K562 (cell line): ENCODE measurements at regions of chr14 and their contacts with region 1.

Region 1: DNA sequence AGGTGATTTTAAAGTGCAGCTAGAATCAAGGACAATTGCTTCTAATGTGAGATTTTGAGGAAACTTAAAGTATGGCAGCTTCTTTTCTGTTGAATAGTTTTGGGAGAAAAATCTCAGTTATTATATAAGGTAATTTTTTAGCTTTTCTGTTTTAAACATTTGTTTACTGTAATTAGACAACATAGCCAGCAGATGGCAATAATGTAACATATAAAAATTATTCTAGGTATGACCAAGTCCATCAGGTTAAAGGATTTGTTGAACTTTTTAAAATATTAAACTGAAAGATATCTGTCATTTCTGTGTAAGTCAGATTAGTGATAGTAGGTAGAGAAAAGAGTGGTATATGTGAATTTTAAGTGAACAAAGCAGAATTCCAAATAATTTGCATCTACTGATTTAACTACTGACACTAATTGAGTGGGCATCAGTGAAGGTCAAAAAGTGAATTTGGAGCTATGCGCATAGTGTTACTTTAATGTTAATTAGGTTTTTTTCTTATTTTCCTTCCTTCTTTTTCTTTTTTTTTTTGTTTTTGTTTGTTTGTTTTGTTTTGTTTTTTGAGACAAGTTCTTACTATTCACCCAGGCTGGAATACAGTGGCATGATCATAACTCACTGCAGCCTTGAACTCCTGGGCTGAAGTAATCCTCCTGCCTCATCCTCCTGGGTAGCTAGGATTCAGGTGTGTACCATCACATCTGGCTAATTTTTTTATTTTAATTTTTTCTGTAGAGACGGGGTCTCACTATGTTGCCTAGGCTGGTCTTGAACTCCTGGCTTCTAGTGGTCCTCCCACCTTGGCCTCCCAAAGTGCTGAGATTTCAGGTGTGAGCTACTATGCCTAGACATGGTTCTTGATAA is 18.6 kb downstream of the PRORP start:
- DNase-seq: peak in 1 of 4 experiments; percentile 10
- ATAC-seq: no peak
- H3K4me3 ChIP-seq: no peak overlapping the region
- H3K27ac ChIP-seq: no peak overlapping the region
- H3K4me1 ChIP-seq: no peaks in the 10 kb centered on the region
- H3K27me3 ChIP-seq: no peaks in the 10 kb centered on the region
- CTCF ChIP-seq: peak in 2 of 3 experiments; percentile 15 to 47; a peak in 3 of 6 replicates
- EP300 ChIP-seq: no peak
- POLR2A ChIP-seq: no peak
- RAD21 ChIP-seq: peak; percentile 62 to 63

Region 2: DNA sequence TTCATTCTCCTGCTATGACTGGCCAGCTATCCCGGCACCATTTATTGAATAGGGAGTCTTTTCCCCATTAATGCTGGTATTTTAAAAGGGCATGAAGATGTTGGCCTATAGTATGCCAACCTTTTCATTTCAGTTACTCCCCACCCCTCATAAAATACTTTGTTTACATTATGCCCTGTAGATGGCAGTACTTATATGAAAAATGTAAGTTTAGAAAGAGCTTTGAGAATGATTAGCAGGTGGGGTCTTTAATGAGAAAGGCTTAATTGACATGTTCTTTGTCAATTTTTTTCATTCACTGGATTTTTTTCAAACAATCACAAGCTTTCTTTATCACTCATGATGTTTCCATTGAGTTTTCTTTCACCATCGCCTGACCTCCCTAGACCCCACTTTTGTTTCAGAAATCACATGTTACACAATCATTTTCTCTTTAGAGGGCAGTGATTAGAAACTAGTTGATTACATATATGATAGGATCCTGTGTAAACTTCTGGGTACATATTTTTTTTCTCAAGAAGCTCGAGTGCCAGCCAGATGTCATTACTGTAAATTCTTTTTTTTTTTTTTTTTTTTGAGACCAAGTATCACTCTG is 88.6 kb after region 1 on chr14:
- CTCF ChIA-PET with region 1: no interaction called
- POLR2A ChIA-PET with region 1: no interaction called
- in situ Hi-C with region 1: no loop called
- intact Hi-C with region 1: loop called (anchors 5 kb)
- DNase-seq: peak; percentile 3 to 14 (median 14)
- ATAC-seq: no peak
- H3K4me3 ChIP-seq: no peak overlapping the region
- H3K27ac ChIP-seq: no peak overlapping the region
- H3K4me1 ChIP-seq: no peaks in the 10 kb centered on the region
- H3K27me3 ChIP-seq: no peaks in the 10 kb centered on the region
- CTCF ChIP-seq: peak; percentile 5 to 49 (median 29); a peak in 3 of 6 replicates
- EP300 ChIP-seq: no peak
- POLR2A ChIP-seq: no peak
- RAD21 ChIP-seq: peak; percentile 56 to 60

Region 3: GRCh38 chr14:35423621-35424020 is 282.7 kb after region 1 on chr14:
- CTCF ChIA-PET with region 1: interaction called, 12 read pairs
- POLR2A ChIA-PET with region 1: no interaction called
- in situ Hi-C with region 1: no loop called
- intact Hi-C with region 1: no loop called
- DNase-seq: no peak
- ATAC-seq: no peak
- H3K4me3 ChIP-seq: no peak overlapping the region
- H3K27ac ChIP-seq: no peak overlapping the region
- H3K4me1 ChIP-seq: peaks cover 0 to 4% of the 10 kb centered on the region in 2 experiments; a peak in 1 of 5 replicates
- H3K27me3 ChIP-seq: no peaks in the 10 kb centered on the region
- CTCF ChIP-seq: no peak
- EP300 ChIP-seq: no peak
- POLR2A ChIP-seq: no peak
- RAD21 ChIP-seq: no peak